HepG2 (cell line): ENCODE measurements at regions of chr14 and their contacts with region 1.

Region 1: DNA sequence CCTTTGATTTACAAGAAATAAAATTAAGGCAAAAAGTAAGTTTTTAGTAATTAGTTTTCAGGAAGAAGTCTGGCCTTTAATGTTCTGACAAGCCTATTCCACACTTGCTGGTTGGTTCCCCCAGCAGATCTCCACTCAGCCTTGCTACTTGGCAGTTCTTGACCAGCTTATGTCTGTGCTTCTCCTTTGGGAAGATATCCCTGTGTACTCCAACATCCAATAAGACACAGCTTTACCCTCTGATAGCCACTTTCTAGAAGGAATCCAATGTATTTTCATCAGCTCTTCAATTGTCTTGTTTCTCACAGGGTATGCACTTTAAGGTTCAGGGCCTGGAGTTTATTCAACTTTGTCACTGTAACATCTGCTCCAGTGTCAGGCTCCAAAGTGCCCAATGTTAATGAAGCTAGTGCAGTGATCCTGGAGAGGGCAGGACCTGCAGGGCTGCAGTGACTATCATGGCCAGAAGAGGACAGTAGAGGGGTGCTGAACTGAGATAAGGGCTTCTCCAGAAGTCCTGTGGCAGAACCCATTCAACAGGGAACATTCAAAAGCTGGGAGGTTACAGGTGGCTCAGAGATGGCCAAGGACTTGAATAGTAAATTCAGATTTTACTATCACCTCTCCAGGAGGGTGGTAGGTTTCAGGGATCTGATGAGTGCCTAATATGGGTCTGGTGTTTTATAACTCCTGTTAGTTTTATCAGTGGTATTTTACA is 22.9 kb downstream of the JKAMP start:
- DNase-seq: peak; percentile 62
- ATAC-seq: peak; percentile 97
- H3K4me3 ChIP-seq: no peak overlapping the region
- H3K27ac ChIP-seq: no peak overlapping the region
- H3K4me1 ChIP-seq: peaks cover 30% of the 10 kb centered on the region
- H3K27me3 ChIP-seq: no peaks in the 10 kb centered on the region
- CTCF ChIP-seq: peak; percentile 87
- EP300 ChIP-seq: no peak
- POLR2A ChIP-seq: no peak
- RAD21 ChIP-seq: peak; percentile 66

Region 2: DNA sequence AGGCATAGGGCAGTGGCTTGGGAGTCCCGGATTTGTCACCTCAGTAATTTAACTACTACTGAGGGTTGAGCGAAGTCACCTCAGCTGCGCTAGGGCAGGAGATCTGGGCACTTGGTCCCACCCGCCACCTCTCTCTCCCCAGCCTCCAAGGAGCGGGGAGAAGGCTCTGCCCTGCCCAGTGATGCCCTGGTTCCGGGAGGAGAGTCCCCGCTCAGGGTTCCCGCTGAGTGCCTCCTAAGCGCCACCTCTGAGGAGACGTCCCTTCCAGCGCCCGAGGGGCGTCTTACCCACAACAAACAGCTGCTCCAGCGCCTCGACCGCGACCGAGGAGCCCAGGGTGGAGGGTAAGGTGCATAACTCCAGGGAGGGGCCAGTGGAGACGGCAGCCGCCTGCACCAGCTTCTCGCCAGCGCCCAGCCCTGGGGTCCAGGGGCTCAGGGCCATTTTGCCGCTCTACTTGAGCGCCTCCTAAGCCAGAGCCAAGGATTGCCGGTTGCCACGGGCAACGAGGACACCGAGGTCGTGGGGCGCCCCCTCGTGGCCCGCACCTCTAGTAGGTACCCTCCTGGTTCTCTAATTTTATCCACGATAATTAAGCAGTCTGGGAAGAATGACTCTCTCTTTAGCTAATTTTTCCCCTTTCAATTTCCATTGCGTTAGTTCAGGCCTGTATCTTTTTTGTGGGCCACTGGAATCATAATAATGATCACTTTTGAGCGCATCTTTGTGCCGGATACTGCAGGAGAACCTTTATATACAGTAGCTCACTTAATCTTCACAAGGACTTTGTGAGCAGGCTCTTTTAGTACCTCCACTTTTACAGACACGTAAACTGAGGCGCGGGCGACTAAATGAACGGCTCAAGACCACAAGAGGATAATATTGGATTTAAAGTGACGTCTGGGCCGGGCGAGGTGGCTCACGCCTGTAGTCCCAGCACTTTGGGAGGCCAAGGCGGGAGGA is 69.4 kb after region 1 on chr14 and contains the start of gene CCDC175:
- CTCF ChIA-PET with region 1: no interaction called
- POLR2A ChIA-PET with region 1: no interaction called
- in situ Hi-C with region 1: loop called (anchors 10 kb)
- intact Hi-C with region 1: loop called (anchors 1 kb)
- DNase-seq: peak; percentile 66
- ATAC-seq: peak; percentile 99
- H3K4me3 ChIP-seq: no peak within 1 kb of the TSS
- H3K27ac ChIP-seq: no peak within 1 kb of the TSS
- H3K4me1 ChIP-seq: no peaks in the 10 kb centered on the region
- H3K27me3 ChIP-seq: no peaks in the 10 kb centered on the region
- CTCF ChIP-seq: peak; percentile 78
- EP300 ChIP-seq: no peak
- POLR2A ChIP-seq: no peak
- RAD21 ChIP-seq: peak; percentile 70
- total RNA-seq, gene CCDC175: not detected in 2 replicates

Region 3: GRCh38 chr14:59583755-59584154 is 76.5 kb after region 1 on chr14:
- CTCF ChIA-PET with region 1: no interaction called
- POLR2A ChIA-PET with region 1: no interaction called
- in situ Hi-C with region 1: loop called (anchors 10 kb)
- intact Hi-C with region 1: no loop called
- DNase-seq: no peak
- ATAC-seq: no peak
- H3K4me3 ChIP-seq: no peak overlapping the region
- H3K27ac ChIP-seq: no peak overlapping the region
- H3K4me1 ChIP-seq: no peaks in the 10 kb centered on the region
- H3K27me3 ChIP-seq: 0 out of 5 replicates have a peak, but pooled peaks cover 0 to 2% of the 10 kb centered on the region in 2 experiments
- CTCF ChIP-seq: no peak
- EP300 ChIP-seq: no peak
- POLR2A ChIP-seq: no peak
- RAD21 ChIP-seq: no peak

Region 4: DNA sequence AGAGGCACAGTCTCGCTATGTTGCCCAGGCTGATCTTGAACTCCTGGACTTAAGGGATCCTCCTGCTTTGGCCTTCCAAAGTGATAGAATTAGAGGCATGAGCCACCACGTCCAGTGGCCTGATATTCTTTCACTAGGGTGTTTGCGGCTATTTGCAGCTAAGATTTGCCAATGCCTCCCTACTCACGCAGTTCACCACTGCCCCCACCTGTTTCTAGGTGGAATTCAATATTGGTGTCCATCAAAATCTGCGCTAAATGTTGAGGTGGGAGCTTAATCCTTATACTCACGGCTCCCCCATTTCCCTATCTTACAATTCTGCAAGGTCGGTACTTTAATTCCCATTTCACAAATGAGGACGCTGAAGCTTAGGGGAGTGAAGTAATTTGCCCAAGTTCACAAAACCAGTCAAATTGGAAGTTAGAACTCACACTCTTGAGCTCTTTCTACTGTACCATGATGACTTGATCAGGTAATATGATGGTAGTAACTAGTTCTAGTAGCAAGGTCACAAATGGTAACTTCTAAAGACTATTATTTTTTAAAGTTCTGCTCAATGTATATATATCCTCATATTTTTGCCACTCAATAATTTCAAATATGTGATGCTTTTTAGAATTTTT is 390.6 kb after region 1 on chr14:
- CTCF ChIA-PET with region 1: no interaction called
- POLR2A ChIA-PET with region 1: no interaction called
- in situ Hi-C with region 1: no loop called
- intact Hi-C with region 1: loop called (anchors 10 kb)
- DNase-seq: peak; percentile 30
- ATAC-seq: peak; percentile 93
- H3K4me3 ChIP-seq: no peak overlapping the region
- H3K27ac ChIP-seq: no peak overlapping the region
- H3K4me1 ChIP-seq: no peaks in the 10 kb centered on the region
- H3K27me3 ChIP-seq: peaks cover 0 to 5% of the 10 kb centered on the region in 2 experiments; a peak in 3 of 5 replicates
- CTCF ChIP-seq: peak; percentile 79
- EP300 ChIP-seq: no peak
- POLR2A ChIP-seq: no peak
- RAD21 ChIP-seq: peak; percentile 64

Region 5: DNA sequence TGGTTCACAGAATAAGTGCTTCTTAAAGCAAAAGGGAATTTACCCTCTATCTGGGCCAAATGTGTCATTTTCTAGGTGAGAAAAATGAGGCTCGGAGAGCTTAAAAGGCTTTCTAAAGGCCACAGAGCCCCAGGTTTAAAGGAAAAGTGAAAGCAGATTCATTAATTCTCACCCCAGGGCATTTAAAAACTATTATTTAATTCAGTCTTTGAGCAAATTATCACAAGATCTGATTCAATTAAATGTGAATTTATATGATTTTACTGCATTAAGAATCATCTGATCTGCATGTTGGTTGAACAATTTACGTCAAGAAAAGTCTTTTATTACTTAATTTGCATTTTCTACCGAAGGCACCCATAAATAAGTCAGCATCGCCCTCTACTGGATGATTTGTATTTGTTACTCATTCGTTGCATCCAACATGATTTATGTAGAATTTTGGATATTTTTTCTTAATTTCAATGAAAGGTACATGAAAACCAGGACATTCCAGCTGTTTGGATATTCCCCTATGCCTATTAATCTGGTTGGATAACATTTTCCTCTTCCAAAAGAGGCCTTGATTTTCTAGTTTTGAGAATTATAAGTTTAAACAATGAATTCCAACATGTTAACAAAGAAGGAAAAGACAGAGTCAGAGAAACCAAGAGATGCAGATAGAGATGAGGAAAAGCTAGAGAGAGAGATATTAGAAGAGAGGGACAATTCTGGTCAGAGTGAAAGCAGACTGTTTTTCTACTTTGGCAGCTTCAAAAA is 677.1 kb after region 1 on chr14:
- CTCF ChIA-PET with region 1: no interaction called
- POLR2A ChIA-PET with region 1: no interaction called
- in situ Hi-C with region 1: loop called (anchors 25 kb)
- intact Hi-C with region 1: no loop called
- DNase-seq: peak; percentile 55
- ATAC-seq: 0 out of 3 replicates have a peak, but pooled peaks have one; percentile 36
- H3K4me3 ChIP-seq: peak overlapping the region; percentile 33 to 71 (median 45); a peak in 5 of 6 replicates
- H3K27ac ChIP-seq: no peak overlapping the region
- H3K4me1 ChIP-seq: peaks cover 12% of the 10 kb centered on the region; the same call in 1 of the 2 replicates
- H3K27me3 ChIP-seq: no peaks in the 10 kb centered on the region
- CTCF ChIP-seq: peak; percentile 74
- EP300 ChIP-seq: no peak
- POLR2A ChIP-seq: no peak
- RAD21 ChIP-seq: peak; percentile 61; the same call in 1 of the 2 replicates